ENCODE measurements at regions of chr12 and their contacts with region 1.

Region 1: GRCh38 chr12:51341259-51342007 is 5.0 kb downstream of the CELA1 start:
- DNase-seq: no peak
- ATAC-seq: peak; percentile 83

Region 2: GRCh38 chr12:50825372-50825838 is 516.0 kb before region 1 on chr12:
- intact Hi-C with region 1: loop called (anchors 1 kb)
- DNase-seq: no peak
- ATAC-seq: peak; percentile 75

Region 3: GRCh38 chr12:51047655-51048540 is 293.5 kb before region 1 on chr12 and contains the start of gene LETMD1:
- intact Hi-C with region 1: loop called (anchors 1 kb)
- DNase-seq: peak; percentile 94
- ATAC-seq: peak; percentile 99
- total RNA-seq, gene LETMD1: 17.0 TPM

Region 4: DNA sequence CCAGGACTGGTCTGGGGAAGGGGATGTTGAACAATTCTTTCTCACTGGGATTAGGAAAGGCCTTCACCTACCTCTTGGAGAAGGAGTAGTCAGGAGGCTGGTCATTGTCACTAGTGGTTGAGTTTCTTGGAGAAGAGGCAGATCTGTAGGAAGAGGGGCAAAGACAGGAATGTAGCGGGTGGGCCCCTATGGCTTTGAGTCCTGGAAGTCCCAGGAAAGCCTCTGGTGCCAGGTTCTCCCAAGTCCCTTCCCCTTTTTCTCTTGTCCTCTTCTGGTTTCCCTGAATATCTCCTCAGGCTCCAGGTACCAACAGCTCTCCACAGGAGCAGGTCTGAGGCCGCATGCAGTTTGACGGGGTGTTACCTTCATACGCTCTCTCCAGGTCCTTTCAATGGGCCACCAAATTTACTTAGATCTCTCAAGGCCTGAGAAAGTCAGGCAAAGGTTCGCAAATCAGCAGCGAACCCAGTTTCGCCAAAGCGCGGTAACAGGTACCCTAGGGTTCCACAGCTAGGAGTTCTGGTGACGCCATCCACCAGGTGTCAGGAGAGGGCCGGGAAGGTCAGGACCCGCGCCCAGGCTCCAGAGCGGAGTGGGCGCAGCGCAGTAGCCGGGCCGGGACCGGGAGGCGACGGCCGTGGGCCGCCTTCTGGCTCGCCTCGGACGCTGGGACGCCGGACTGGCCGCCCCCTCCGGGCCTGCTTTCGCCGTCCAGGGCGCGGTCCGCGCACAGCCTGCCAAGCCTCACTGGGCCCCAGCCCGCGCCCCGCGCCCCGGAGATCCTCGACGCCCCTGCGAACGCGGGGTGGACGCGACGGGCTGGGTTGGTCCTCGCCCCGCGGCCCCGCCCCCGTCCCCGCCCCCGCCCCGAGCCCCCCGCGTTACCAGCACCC is 72.0 kb before region 1 on chr12:
- intact Hi-C with region 1: loop called (anchors 1 kb)
- DNase-seq: no peak
- ATAC-seq: peak; percentile 40

Region 5: GRCh38 chr12:51631591-51631990 is 290.2 kb after region 1 on chr12:
- intact Hi-C with region 1: no loop called
- DNase-seq: no peak
- ATAC-seq: no peak

Measured in Right ventricle myocardium inferior (tissue), 1 donor.